ENCODE measurements at regions of chr16 and their contacts with region 1.

Region 1: DNA sequence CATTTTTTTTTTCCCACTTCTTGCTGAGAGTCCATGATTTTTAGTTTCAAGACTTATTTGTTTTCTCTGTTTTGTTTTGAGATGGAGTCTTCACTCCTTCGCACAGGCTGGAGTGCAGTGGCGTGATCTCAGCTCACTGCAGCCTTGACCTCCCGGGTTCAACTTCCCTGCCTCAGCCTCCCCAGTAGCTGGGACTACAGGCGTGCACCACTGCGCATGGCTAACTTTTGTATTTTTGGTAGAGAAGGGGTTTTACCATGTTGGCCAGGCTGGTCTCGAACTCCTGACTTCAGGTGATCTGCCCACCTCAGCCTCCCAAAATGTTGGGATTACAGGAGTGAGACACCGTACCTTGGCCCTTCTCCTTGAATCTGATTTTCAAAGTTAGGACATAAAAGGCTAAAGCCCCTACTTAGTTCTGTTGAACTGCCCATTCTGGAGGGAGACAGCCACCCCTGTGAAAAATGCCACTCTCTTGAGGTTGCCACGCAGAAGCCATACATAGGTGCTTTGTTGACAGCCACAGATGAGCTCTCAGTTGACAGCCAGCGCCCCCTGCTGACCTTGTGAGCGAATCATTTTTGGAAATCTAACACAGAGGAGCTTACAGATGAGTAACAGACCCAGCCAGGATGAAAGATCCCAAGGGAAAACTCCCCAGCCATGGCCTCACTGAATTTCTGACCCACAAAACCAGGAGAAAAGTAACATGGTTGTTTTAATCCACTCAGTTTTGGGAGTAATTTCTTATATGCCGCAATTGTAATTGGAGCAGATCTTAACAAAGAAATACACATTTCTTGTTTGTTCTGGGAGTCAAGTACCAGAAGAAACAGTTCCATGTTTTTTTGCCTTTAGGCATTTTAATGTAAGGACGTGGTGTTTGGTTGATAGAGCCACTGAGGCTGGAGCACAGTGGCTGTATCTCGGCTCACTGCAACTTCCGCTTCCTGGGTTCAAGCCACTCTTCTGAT is 38.8 kb downstream of the PKD1L3 start:
- DNase-seq: peak; percentile 52 to 81 (median 74)
- ATAC-seq: peak; percentile 98
- H3K4me3 ChIP-seq: no peak overlapping the region
- H3K4me3 Mint-ChIP-seq: no peak overlapping the region
- H3K27ac ChIP-seq: no peak overlapping the region
- H3K27ac Mint-ChIP-seq: no peak overlapping the region
- H3K4me1 ChIP-seq: no peaks in the 10 kb centered on the region
- H3K4me1 Mint-ChIP-seq: peaks cover 3 to 24% (median 17%) of the 10 kb centered on the region in 7 donors
- H3K27me3 ChIP-seq: no peaks in the 10 kb centered on the region
- H3K27me3 Mint-ChIP-seq: peaks cover 0 to 8% (median 0%) of the 10 kb centered on the region in 5 donors

Region 2: DNA sequence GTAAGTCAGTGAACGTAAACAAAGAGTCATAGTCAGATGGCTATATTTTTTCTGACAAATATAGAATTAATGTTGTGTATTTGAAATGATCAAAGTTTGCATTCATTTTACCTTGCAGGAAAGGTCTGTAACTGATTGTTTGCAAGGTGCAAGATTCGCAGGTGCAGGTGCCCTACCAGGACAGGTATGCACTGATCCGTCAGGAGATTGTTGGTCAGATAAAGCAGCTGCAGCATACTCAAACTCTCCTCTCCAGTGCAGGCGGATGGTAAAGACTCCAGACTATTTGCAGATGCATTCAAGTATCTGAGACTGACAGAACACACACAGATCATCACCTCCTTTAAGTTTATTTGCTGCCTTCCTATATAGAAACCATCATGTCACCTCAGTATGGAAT is 297.6 kb before region 1 on chr16:
- CTCF ChIA-PET with region 1: no interaction called
- POLR2A ChIA-PET with region 1: no interaction called
- intact Hi-C with region 1: no loop called
- DNase-seq: no peak
- ATAC-seq: no peak
- H3K4me3 ChIP-seq: no peak overlapping the region
- H3K4me3 Mint-ChIP-seq: no peak overlapping the region
- H3K27ac ChIP-seq: no peak overlapping the region
- H3K27ac Mint-ChIP-seq: no peak overlapping the region
- H3K4me1 ChIP-seq: no peaks in the 10 kb centered on the region
- H3K4me1 Mint-ChIP-seq: peaks cover 0 to 2% (median 0%) of the 10 kb centered on the region in 7 donors
- H3K27me3 ChIP-seq: no peaks in the 10 kb centered on the region
- H3K27me3 Mint-ChIP-seq: no peaks in the 10 kb centered on the region

Region 3: DNA sequence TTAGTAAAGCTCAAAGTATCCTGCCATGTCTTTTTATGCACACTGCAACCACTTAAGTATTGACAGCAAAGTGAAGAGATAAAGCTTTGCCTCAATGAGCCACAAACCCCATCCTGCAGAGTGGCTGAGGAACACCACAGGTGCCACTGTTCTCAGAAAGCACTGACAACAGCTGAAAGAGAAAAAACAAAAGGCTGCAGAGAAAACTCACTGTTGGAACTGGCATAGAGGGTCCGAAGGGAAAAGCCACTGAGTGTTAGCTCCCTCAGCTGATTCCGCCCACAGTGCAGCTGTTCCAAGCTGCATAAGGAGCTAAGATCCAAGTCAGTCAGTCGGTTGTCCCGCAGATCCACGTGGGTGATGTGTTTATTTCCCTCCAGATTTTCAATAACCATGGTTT is 285.1 kb before region 1 on chr16:
- CTCF ChIA-PET with region 1: no interaction called
- POLR2A ChIA-PET with region 1: no interaction called
- intact Hi-C with region 1: loop called in 1 of 2 experiments (anchors 5 kb)
- DNase-seq: no peak
- ATAC-seq: no peak
- H3K4me3 ChIP-seq: no peak overlapping the region
- H3K4me3 Mint-ChIP-seq: no peak overlapping the region
- H3K27ac ChIP-seq: no peak overlapping the region
- H3K27ac Mint-ChIP-seq: peak overlapping the region in 1 of 9 donors; percentile 33
- H3K4me1 ChIP-seq: no peaks in the 10 kb centered on the region
- H3K4me1 Mint-ChIP-seq: peaks cover 0 to 5% (median 0%) of the 10 kb centered on the region in 7 donors
- H3K27me3 ChIP-seq: no peaks in the 10 kb centered on the region
- H3K27me3 Mint-ChIP-seq: no peaks in the 10 kb centered on the region

Region 4: GRCh38 chr16:71709231-71709781 is 252.0 kb before region 1 on chr16:
- CTCF ChIA-PET with region 1: no interaction called
- POLR2A ChIA-PET with region 1: no interaction called
- intact Hi-C with region 1: no loop called
- DNase-seq: no peak
- ATAC-seq: no peak
- H3K4me3 ChIP-seq: no peak overlapping the region
- H3K4me3 Mint-ChIP-seq: no peak overlapping the region
- H3K27ac ChIP-seq: no peak overlapping the region
- H3K27ac Mint-ChIP-seq: no peak overlapping the region
- H3K4me1 ChIP-seq: no peaks in the 10 kb centered on the region
- H3K4me1 Mint-ChIP-seq: peaks cover 0 to 10% (median 3%) of the 10 kb centered on the region in 7 donors
- H3K27me3 ChIP-seq: no peaks in the 10 kb centered on the region
- H3K27me3 Mint-ChIP-seq: no peaks in the 10 kb centered on the region

Region 5: DNA sequence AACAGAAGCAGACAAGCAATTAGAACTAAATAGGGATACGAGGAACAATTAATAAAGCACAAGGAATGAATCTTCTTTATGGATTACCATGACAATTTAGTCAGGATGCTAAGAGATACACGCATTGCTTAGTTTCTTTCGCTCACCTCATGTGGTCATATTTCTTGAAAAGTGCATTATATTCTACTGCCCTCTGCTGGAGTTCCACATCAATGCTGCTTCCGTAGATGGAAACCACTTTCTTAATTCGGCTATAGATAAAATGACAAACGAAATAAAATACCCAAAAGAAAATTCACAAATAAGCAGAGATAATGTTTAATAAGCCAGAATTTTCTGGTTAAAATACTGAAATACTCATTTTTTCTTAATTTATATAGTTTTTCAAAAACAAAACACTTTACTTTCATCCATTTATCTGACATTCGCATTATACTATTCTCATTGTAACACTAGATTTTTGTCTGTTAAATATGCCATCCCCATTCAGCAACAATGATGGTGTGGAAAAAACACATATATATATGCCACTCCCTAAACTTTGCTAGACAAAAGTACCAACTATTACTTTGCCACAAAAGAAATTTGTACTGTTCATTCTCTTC is 214.8 kb before region 1 on chr16:
- CTCF ChIA-PET with region 1: interaction called, 3 read pairs
- POLR2A ChIA-PET with region 1: no interaction called
- intact Hi-C with region 1: loop called (anchors 1 to 2 kb)
- DNase-seq: peak in 7 of 9 donors; percentile 14 to 59 (median 45)
- ATAC-seq: peak; percentile 82
- H3K4me3 ChIP-seq: no peak overlapping the region
- H3K4me3 Mint-ChIP-seq: no peak overlapping the region
- H3K27ac ChIP-seq: no peak overlapping the region
- H3K27ac Mint-ChIP-seq: peak overlapping the region in 1 of 9 donors; percentile 14
- H3K4me1 ChIP-seq: no peaks in the 10 kb centered on the region
- H3K4me1 Mint-ChIP-seq: peaks cover 0 to 5% (median 0%) of the 10 kb centered on the region in 7 donors
- H3K27me3 ChIP-seq: no peaks in the 10 kb centered on the region
- H3K27me3 Mint-ChIP-seq: no peaks in the 10 kb centered on the region

Region 6: GRCh38 chr16:71788578-71788977 is 172.8 kb before region 1 on chr16:
- CTCF ChIA-PET with region 1: interaction called, 5 read pairs
- POLR2A ChIA-PET with region 1: no interaction called
- intact Hi-C with region 1: loop called in 1 of 2 experiments (anchors 5 kb)
- DNase-seq: no peak
- ATAC-seq: no peak
- H3K4me3 ChIP-seq: no peak overlapping the region
- H3K4me3 Mint-ChIP-seq: no peak overlapping the region
- H3K27ac ChIP-seq: no peak overlapping the region
- H3K27ac Mint-ChIP-seq: peak overlapping the region in 3 of 9 donors; percentile 9 to 57 (median 21)
- H3K4me1 ChIP-seq: peaks cover 7 to 20% of the 10 kb centered on the region in 2 donors
- H3K4me1 Mint-ChIP-seq: peaks cover 32 to 71% (median 60%) of the 10 kb centered on the region in 7 donors
- H3K27me3 ChIP-seq: no peaks in the 10 kb centered on the region
- H3K27me3 Mint-ChIP-seq: no peaks in the 10 kb centered on the region

Region 7: DNA sequence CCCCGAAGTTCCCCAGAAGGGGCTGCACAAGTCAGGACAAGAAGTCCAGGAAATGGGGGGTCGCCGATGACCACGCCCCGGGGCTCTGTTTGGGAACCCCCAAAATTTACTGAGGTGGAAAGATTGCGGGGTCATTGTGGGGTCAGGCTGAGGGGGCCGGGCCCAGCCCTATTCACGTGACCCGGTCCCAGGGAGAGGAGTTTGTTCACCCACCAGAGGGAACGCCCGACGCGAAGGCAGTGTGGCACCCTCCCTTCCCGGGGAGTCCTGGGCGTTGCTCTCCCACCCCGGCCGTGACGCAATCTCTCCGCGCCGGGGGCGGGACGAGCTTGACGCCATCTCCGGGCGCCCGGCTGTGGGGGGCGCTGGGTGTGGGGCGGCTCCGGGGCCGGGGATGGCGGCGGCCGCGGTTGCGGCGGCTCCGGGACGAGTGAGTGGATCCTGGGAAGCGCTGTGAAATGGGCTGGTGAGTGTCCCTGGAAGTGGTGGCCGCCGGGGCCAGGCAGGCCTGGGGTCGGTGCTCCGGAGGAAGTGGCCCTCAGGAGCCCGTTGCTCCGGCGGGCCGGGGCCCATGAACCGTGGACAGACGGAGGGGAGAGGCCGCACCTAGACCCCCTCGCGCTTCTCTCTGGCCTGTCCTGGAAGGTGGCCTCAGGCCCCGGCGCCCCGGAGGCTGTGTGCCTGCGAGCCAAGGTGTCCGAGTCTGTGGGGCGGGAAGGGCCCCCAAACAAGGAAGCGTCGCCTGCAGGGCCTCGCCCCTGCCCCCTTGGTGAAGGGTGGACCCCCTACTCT is 115.5 kb before region 1 on chr16 and contains the start of gene ATXN1L:
- CTCF ChIA-PET with region 1: no interaction called
- POLR2A ChIA-PET with region 1: no interaction called
- intact Hi-C with region 1: loop called in 1 of 2 experiments (anchors 1 kb)
- DNase-seq: peak; percentile 91 to 100 (median 95)
- ATAC-seq: peak; percentile 97
- H3K4me3 ChIP-seq: peak within 1 kb of the TSS; percentile 97
- H3K4me3 Mint-ChIP-seq: peak within 1 kb of the TSS; percentile 92 to 96 (median 94)
- H3K27ac ChIP-seq: peak within 1 kb of the TSS; percentile 92
- H3K27ac Mint-ChIP-seq: peak within 1 kb of the TSS; percentile 95 to 98 (median 97)
- H3K4me1 ChIP-seq: peaks cover 10 to 16% of the 10 kb centered on the region in 2 donors
- H3K4me1 Mint-ChIP-seq: peaks cover 18 to 50% (median 42%) of the 10 kb centered on the region in 7 donors
- H3K27me3 ChIP-seq: no peaks in the 10 kb centered on the region
- H3K27me3 Mint-ChIP-seq: no peaks in the 10 kb centered on the region
- total RNA-seq, gene ATXN1L: 24.6 to 52.9 (median 30.7) TPM

Region 8: GRCh38 chr16:71894921-71895678 is 66.3 kb before region 1 on chr16 and contains the start of gene IST1:
- CTCF ChIA-PET with region 1: interaction called, 4 read pairs
- POLR2A ChIA-PET with region 1: no interaction called
- intact Hi-C with region 1: loop called in 1 of 2 experiments (anchors 2 kb)
- DNase-seq: peak; percentile 88 to 98 (median 98)
- ATAC-seq: peak; percentile 97
- H3K4me3 ChIP-seq: peak within 1 kb of the TSS; percentile 99
- H3K4me3 Mint-ChIP-seq: peak within 1 kb of the TSS; percentile 95 to 99 (median 96)
- H3K27ac ChIP-seq: peak within 1 kb of the TSS; percentile 98
- H3K27ac Mint-ChIP-seq: peak within 1 kb of the TSS; percentile 92 to 98 (median 97)
- H3K4me1 ChIP-seq: peaks cover 22 to 25% of the 10 kb centered on the region in 2 donors
- H3K4me1 Mint-ChIP-seq: peaks cover 23 to 43% (median 30%) of the 10 kb centered on the region in 7 donors
- H3K27me3 ChIP-seq: no peaks in the 10 kb centered on the region
- H3K27me3 Mint-ChIP-seq: no peaks in the 10 kb centered on the region
- total RNA-seq, gene IST1: 176 to 303 (median 286) TPM

Region 9: GRCh38 chr16:72093448-72094265 is 132.3 kb after region 1 on chr16 and contains the starts of genes DHX38 and TXNL4B:
- CTCF ChIA-PET with region 1: no interaction called
- POLR2A ChIA-PET with region 1: no interaction called
- intact Hi-C with region 1: loop called in 1 of 2 experiments (anchors 5 kb)
- DNase-seq: peak; percentile 70 to 95 (median 92)
- ATAC-seq: peak; percentile 98
- H3K4me3 ChIP-seq: peak within 1 kb of the TSS; percentile 86
- H3K4me3 Mint-ChIP-seq: peak within 1 kb of the TSS; percentile 94 to 100 (median 98)
- H3K27ac ChIP-seq: peak within 1 kb of the TSS; percentile 93
- H3K27ac Mint-ChIP-seq: peak within 1 kb of the TSS; percentile 92 to 100 (median 99)
- H3K4me1 ChIP-seq: peaks cover 21 to 24% of the 10 kb centered on the region in 2 donors
- H3K4me1 Mint-ChIP-seq: peaks cover 33 to 70% (median 63%) of the 10 kb centered on the region in 7 donors
- H3K27me3 ChIP-seq: no peaks in the 10 kb centered on the region
- H3K27me3 Mint-ChIP-seq: no peaks in the 10 kb centered on the region
- total RNA-seq, gene DHX38: 90.1 to 113 (median 104) TPM
- total RNA-seq, gene TXNL4B: 12.5 to 20.9 (median 18.5) TPM